AG04450 (cell line): ENCODE measurements at regions of chr5 and their contacts with region 1.

Region 1: GRCh38 chr5:112995764-112996618 is 19.4 kb downstream of the DCP2 start:
- DNase-seq: peak; percentile 50
- H3K4me3 ChIP-seq: no peak overlapping the region
- H3K27ac ChIP-seq: no peak overlapping the region
- H3K27me3 ChIP-seq: no peaks in the 10 kb centered on the region
- CTCF ChIP-seq: peak; percentile 89

Region 2: GRCh38 chr5:112915831-112916230 is 80.2 kb before region 1 on chr5:
- CTCF ChIA-PET with region 1: interaction called, 10 read pairs
- POLR2A ChIA-PET with region 1: no interaction called
- DNase-seq: no peak
- H3K4me3 ChIP-seq: no peak overlapping the region
- H3K27ac ChIP-seq: no peak overlapping the region
- H3K27me3 ChIP-seq: no peaks in the 10 kb centered on the region
- CTCF ChIP-seq: no peak

Region 3: GRCh38 chr5:113022661-113023060 is 26.7 kb after region 1 on chr5:
- CTCF ChIA-PET with region 1: interaction called, 17 read pairs
- POLR2A ChIA-PET with region 1: no interaction called
- DNase-seq: no peak
- H3K4me3 ChIP-seq: no peak overlapping the region
- H3K27ac ChIP-seq: no peak overlapping the region
- H3K27me3 ChIP-seq: no peaks in the 10 kb centered on the region
- CTCF ChIP-seq: no peak

Region 4: DNA sequence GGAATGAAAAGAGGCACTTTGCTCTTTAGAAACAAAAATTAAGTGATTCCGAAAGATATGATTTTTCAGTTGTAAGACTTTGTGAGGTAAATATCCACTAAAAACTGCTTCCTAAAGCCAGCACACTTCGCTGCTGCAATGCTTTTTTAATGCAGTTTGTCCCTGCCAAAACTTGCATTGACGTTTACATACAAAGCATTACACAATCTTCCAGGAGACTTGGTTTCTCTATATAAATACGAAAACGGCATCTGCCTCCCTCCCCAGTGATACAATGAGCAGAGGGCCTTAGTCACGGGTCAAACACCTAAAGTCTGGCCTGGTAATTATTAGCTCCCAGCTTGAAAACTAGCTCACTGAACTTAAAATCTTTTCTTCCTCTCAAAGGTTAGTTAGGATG is 268.1 kb after region 1 on chr5:
- CTCF ChIA-PET with region 1: interaction called, 13 read pairs
- POLR2A ChIA-PET with region 1: no interaction called
- DNase-seq: peak; percentile 64
- H3K4me3 ChIP-seq: no peak overlapping the region
- H3K27ac ChIP-seq: peak overlapping the region; percentile 47
- H3K27me3 ChIP-seq: no peaks in the 10 kb centered on the region
- CTCF ChIP-seq: no peak

Region 5: GRCh38 chr5:113330533-113331208 is 334.7 kb after region 1 on chr5:
- CTCF ChIA-PET with region 1: interaction called, 17 read pairs
- POLR2A ChIA-PET with region 1: no interaction called
- DNase-seq: no peak
- H3K4me3 ChIP-seq: no peak overlapping the region
- H3K27ac ChIP-seq: no peak overlapping the region
- H3K27me3 ChIP-seq: no peaks in the 10 kb centered on the region
- CTCF ChIP-seq: peak; percentile 54

Region 6: GRCh38 chr5:113507601-113508000 is 511.6 kb after region 1 on chr5:
- CTCF ChIA-PET with region 1: interaction called, 74 read pairs
- POLR2A ChIA-PET with region 1: no interaction called
- DNase-seq: no peak
- H3K4me3 ChIP-seq: no peak overlapping the region
- H3K27ac ChIP-seq: no peak overlapping the region
- H3K27me3 ChIP-seq: no peaks in the 10 kb centered on the region
- CTCF ChIP-seq: no peak